ENCODE measurements at regions of chr4 and their contacts with region 1.

Region 1: DNA sequence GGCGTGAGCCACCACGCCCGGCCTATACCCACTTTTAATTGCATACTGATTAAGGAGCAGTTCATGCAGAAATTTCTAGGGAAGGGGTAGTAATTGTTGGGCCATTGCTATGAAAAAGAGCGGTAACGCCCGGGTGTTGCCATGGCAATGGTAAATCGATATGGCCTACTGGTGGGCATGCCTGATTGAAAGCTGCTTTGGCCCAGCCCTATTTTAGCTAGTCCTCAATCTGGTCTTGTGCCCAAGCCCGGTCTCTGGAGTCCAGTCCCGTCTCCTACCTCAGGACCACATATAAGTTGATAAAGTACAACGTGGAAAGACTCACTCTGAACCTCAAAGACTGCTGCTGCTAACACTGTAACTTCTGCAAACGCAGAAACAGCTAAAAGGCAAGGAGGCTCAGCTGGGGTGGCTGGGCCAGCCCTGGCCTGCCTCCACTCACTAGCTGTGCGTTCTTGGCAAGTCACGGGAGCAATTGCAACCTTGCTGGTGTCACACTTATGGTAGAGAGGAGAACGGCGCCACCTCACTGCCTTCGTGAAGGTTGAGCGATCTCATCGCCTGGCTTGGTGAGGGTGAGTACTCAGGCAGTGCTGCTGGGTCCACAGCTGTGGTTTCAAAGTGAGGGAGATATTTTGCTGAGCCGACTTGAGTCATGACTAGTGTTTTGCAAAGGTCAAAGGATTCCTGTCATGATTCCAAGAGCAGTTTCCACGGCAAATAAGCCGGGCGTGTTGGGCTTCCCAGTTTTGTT is 57.0 kb upstream of the GRPEL1 start:
- DNase-seq: peak; percentile 95
- ATAC-seq: peak; percentile 99
- H3K4me3 ChIP-seq: no peak overlapping the region
- H3K27ac ChIP-seq: no peak overlapping the region; the same call in 1 of the 2 replicates
- H3K4me1 ChIP-seq: peaks cover 4% of the 10 kb centered on the region; the same call in 1 of the 2 replicates
- H3K27me3 ChIP-seq: peaks cover 10% of the 10 kb centered on the region; the same call in 1 of the 2 replicates
- CTCF ChIP-seq: 0 out of 2 replicates have a peak, but pooled peaks have one; percentile 21
- POLR2A ChIP-seq: no peak
- RAD21 ChIP-seq: peak; percentile 20; the same call in 1 of the 2 replicates

Region 2: DNA sequence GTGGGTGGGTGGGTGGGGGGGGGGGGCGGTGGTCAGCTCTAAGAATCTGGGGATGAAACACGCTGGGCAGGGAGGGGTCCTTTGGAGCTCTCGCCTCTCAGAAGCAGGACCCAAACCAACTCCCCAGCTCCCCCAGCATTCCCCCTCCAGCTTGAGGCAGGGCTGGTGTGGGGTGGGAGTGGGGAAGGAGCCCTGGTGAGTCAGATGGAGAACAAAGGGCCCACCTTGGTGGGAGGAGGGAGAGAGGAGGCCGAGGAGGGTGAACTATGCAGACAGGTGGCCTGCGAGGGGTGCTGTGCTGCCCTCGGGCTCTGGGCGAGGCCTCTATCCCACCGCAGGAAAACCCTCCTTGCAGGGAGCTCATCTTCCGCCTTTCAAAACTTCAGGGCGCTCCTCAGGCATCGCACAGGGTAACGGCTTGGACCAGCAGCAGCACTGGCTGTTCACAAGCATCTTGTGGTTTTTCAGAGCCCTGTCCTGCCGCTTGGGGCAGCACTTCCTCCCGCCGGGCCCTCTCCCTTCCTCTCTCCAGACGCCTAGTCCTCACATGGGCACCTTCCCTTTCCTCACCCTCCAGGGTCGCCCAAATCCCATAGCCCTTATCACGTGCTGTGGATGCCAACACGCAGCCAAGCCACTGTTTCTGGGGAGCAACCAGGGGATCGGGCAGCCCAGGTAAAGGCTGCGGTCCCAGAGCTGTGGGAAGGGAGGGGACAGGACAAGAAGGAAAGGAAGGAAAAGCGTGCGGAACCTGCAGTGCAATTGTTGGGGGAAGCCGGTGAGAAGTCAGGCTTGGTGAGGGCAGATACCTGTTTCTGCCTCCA is 23.0 kb before region 1 on chr4:
- CTCF ChIA-PET with region 1: interaction called, 3 read pairs
- POLR2A ChIA-PET with region 1: no interaction called
- dilution Hi-C with region 1: no loop called
- in situ Hi-C with region 1: no loop called
- intact Hi-C with region 1: loop called (anchors 1 kb)
- DNase-seq: peak; percentile 60
- ATAC-seq: peak; percentile 79
- H3K4me3 ChIP-seq: peak overlapping the region; percentile 20; the same call in 1 of the 2 replicates
- H3K27ac ChIP-seq: no peak overlapping the region
- H3K4me1 ChIP-seq: peaks cover 6% of the 10 kb centered on the region; the same call in 1 of the 2 replicates
- H3K27me3 ChIP-seq: peaks cover 19% of the 10 kb centered on the region
- CTCF ChIP-seq: peak; percentile 63
- POLR2A ChIP-seq: no peak
- RAD21 ChIP-seq: peak; percentile 45

Region 3: GRCh38 chr4:7183161-7183560 is 58.3 kb after region 1 on chr4:
- CTCF ChIA-PET with region 1: no interaction called
- POLR2A ChIA-PET with region 1: no interaction called
- dilution Hi-C with region 1: no loop called
- in situ Hi-C with region 1: no loop called
- intact Hi-C with region 1: no loop called
- DNase-seq: no peak
- ATAC-seq: no peak
- H3K4me3 ChIP-seq: no peak overlapping the region
- H3K27ac ChIP-seq: no peak overlapping the region
- H3K4me1 ChIP-seq: no peaks in the 10 kb centered on the region
- H3K27me3 ChIP-seq: peaks cover 34% of the 10 kb centered on the region
- CTCF ChIP-seq: no peak
- POLR2A ChIP-seq: no peak
- RAD21 ChIP-seq: no peak

Region 4: DNA sequence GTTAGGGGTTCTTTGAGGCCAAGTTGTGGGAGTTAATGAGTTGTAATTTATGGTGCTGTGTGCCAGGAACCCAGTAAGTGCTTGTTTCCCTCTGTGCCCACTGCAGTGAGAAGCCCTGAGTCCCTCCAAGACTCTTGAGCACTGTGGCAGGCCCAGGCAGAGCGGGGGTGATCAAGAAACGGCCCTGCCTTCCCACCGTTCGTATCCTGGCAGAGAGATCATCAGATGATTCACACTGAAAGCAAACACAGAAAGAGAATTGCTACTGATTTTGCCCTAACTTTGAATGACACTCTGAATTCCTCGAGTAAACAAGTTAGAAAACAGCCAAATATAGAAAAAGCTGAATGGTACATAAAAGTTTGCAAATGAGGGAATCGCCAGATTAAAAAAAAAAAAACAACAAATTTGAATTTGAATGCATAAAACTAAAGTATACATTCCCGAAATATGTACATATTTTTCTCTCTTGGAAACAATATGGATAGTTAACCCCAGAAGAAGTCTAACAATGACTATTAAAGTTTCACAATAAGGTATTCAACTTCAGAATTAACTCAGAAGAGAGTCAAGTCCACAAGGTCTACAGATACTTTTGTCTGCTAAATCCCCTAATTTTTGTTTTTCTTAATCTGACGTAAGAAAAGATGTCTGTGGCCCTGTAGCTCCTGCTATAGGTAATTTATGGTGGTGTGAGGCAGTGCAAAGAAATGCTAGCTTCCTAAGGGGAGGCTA is 743.0 kb after region 1 on chr4:
- CTCF ChIA-PET with region 1: no interaction called
- POLR2A ChIA-PET with region 1: no interaction called
- dilution Hi-C with region 1: no loop called
- in situ Hi-C with region 1: no loop called
- intact Hi-C with region 1: loop called (anchors 5 kb)
- DNase-seq: peak; percentile 73
- ATAC-seq: peak; percentile 58
- H3K4me3 ChIP-seq: no peak overlapping the region
- H3K27ac ChIP-seq: peak overlapping the region; percentile 74
- H3K4me1 ChIP-seq: peaks cover 30% of the 10 kb centered on the region
- H3K27me3 ChIP-seq: no peaks in the 10 kb centered on the region
- CTCF ChIP-seq: no peak
- POLR2A ChIP-seq: no peak
- RAD21 ChIP-seq: peak; percentile 15; the same call in 1 of the 2 replicates

Measured in IMR-90 (cell line).